ENCODE measurements at regions of chr17 and their contacts with region 1.

Region 1: GRCh38 chr17:32909787-32910369 is 18.1 kb upstream of the TMEM98 start:
- DNase-seq: peak; percentile 79
- CTCF ChIP-seq: peak; percentile 75

Region 2: GRCh38 chr17:32651084-32651483 is 258.8 kb before region 1 on chr17:
- CTCF ChIA-PET with region 1: no interaction called
- POLR2A ChIA-PET with region 1: no interaction called
- DNase-seq: no peak
- CTCF ChIP-seq: no peak

Region 3: GRCh38 chr17:32921017-32921416 is 11.1 kb after region 1 on chr17:
- CTCF ChIA-PET with region 1: interaction called, 10 read pairs
- POLR2A ChIA-PET with region 1: no interaction called
- DNase-seq: no peak
- CTCF ChIP-seq: no peak

Region 4: GRCh38 chr17:33363475-33363874 is 453.6 kb after region 1 on chr17:
- CTCF ChIA-PET with region 1: no interaction called
- POLR2A ChIA-PET with region 1: no interaction called
- DNase-seq: no peak
- CTCF ChIP-seq: no peak